Heart right ventricle (tissue), 16 donors: ENCODE measurements at regions of chr2 and their contacts with region 1.

Region 1: DNA sequence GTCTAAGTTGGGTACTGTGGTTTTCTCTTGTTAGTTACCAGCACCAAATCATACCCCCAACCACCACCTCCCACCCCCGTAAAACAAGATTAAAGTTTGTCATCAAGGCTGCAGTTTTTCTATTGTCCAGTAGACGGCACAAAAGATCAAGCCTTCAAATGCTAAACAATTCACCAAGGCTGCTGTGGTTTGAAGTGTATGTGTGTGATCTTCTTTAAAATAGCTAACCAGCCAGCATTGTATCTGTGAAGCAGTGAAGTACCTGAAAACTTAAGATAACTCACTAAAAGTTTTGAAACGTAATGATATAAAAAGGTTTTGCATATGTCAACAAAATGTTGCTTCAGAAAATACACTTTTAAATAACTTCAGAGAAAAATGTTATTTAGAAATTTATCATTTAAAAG is 5.9 kb upstream of the MEIS1 start:
- DNase-seq: no peak
- ATAC-seq: no peak
- H3K4me3 ChIP-seq: no peak overlapping the region
- H3K27ac ChIP-seq: no peak overlapping the region
- H3K4me1 ChIP-seq: peaks cover 0 to 20% (median 12%) of the 10 kb centered on the region in 9 donors
- H3K27me3 ChIP-seq: peaks cover 0 to 99% (median 46%) of the 10 kb centered on the region in 7 donors
- CTCF ChIP-seq: peak; percentile 53 to 88 (median 78)

Region 2: DNA sequence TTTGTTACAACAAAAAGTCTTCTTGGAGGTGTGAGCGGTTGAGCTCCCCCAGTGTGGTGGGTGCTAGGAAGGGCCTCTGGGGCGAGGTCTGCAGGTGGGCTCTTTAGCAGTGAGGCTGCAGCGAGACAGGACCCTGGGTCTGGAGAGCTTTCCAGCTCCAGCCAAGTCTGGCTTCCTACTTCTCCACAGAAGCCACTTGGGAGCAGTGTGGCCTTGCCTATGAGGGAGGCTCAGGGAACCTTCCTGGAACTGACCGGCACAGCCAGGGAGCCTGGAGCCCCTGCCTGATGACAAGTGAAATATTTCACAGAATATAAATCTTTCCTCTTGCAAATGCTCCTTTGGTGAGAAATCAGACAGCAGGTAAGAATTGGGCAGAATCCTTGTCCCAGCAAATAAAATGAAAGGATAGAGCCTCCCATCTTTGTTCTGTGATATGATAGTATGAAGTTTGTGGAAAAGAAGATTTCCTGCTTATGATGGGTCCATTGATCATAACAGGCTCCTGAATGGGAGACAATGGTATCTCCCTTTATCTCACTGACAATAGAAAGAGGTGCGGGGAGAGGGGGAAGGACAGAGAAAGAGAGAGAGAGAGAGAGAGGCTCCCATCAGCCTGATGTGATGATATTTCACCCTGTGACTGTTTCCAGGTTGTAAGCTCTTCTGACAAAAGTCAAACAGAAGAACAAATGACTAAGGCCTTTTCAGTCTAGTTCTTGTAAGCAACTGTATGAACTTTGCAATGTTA is 706.9 kb before region 1 on chr2:
- intact Hi-C with region 1: loop called in 4 of 10 experiments (anchors 2 to 10 kb)
- DNase-seq: peak; percentile 20 to 32
- ATAC-seq: peak; percentile 79 to 93 (median 86)
- H3K4me3 ChIP-seq: no peak overlapping the region
- H3K27ac ChIP-seq: no peak overlapping the region
- H3K4me1 ChIP-seq: no peaks in the 10 kb centered on the region
- H3K27me3 ChIP-seq: peaks cover 0 to 10% (median 0%) of the 10 kb centered on the region in 7 donors
- CTCF ChIP-seq: peak in 8 of 9 donors; percentile 17 to 63 (median 46)

Region 3: GRCh38 chr2:66013465-66013864 is 415.6 kb before region 1 on chr2:
- intact Hi-C with region 1: loop called in 1 of 10 experiments (anchors 10 kb)
- DNase-seq: no peak
- ATAC-seq: no peak
- H3K4me3 ChIP-seq: no peak overlapping the region
- H3K27ac ChIP-seq: no peak overlapping the region
- H3K4me1 ChIP-seq: no peaks in the 10 kb centered on the region
- H3K27me3 ChIP-seq: peaks cover 0 to under 1% (median 0%) of the 10 kb centered on the region in 7 donors
- CTCF ChIP-seq: peak in 3 of 9 donors; percentile 33 to 42 (median 42)

Region 4: GRCh38 chr2:66574701-66575624 is 145.9 kb after region 1 on chr2:
- intact Hi-C with region 1: loop called in 8 of 10 experiments (anchors 2 to 5 kb)
- DNase-seq: peak; percentile 27 to 77
- ATAC-seq: peak; percentile 68 to 83 (median 76)
- H3K4me3 ChIP-seq: peak overlapping the region in 9 of 10 donors; percentile 30 to 63 (median 50)
- H3K27ac ChIP-seq: peak overlapping the region in 5 of 10 donors; percentile 9 to 64 (median 56)
- H3K4me1 ChIP-seq: peaks cover 16 to 46% (median 23%) of the 10 kb centered on the region in 9 donors
- H3K27me3 ChIP-seq: peaks cover 13 to 73% (median 46%) of the 10 kb centered on the region in 7 donors
- CTCF ChIP-seq: peak in 8 of 9 donors; percentile 21 to 70 (median 50)

Region 5: DNA sequence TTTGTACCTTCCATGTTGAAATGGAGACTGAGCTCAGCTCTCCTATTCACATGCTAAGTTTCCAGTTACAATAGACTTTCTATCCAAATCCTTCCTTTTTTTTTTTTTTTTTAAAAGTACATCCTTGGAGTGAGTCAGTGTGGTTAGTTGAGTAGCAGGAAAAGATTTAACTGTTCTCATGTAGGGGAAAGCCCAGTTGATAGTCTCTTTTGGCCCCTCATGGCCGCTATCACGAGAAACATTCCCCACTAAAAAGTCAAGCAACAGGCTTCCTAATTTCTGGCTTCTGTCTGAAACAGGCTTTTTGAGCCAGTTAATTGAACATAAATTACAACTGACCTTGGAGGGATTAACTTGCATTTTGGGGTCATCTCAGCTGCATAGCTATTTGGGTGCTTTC is 167.2 kb after region 1 on chr2:
- intact Hi-C with region 1: no loop called
- DNase-seq: no peak
- ATAC-seq: no peak
- H3K4me3 ChIP-seq: no peak overlapping the region
- H3K27ac ChIP-seq: no peak overlapping the region
- H3K4me1 ChIP-seq: no peaks in the 10 kb centered on the region
- H3K27me3 ChIP-seq: peaks cover 0 to 17% (median 0%) of the 10 kb centered on the region in 7 donors
- CTCF ChIP-seq: no peak

Region 6: GRCh38 chr2:67854798-67855197 is 1425.7 kb after region 1 on chr2:
- intact Hi-C with region 1: loop called in 3 of 10 experiments (anchors 5 to 10 kb)
- DNase-seq: no peak
- ATAC-seq: no peak
- H3K4me3 ChIP-seq: no peak overlapping the region
- H3K27ac ChIP-seq: no peak overlapping the region
- H3K4me1 ChIP-seq: peaks cover 0 to 2% (median 0%) of the 10 kb centered on the region in 9 donors
- H3K27me3 ChIP-seq: peaks cover 0 to 19% (median 13%) of the 10 kb centered on the region in 7 donors
- CTCF ChIP-seq: no peak

Region 7: GRCh38 chr2:68031542-68032160 is 1602.6 kb after region 1 on chr2:
- intact Hi-C with region 1: loop called in 3 of 10 experiments (anchors 10 kb)
- DNase-seq: no peak
- ATAC-seq: no peak
- H3K4me3 ChIP-seq: no peak overlapping the region
- H3K27ac ChIP-seq: no peak overlapping the region
- H3K4me1 ChIP-seq: peaks cover 0 to 3% (median 0%) of the 10 kb centered on the region in 9 donors
- H3K27me3 ChIP-seq: peaks cover 0 to 10% (median 0%) of the 10 kb centered on the region in 7 donors
- CTCF ChIP-seq: peak; percentile 48 to 81 (median 72)